ENCODE measurements at regions of chr9 and their contacts with region 1.

Region 1: DNA sequence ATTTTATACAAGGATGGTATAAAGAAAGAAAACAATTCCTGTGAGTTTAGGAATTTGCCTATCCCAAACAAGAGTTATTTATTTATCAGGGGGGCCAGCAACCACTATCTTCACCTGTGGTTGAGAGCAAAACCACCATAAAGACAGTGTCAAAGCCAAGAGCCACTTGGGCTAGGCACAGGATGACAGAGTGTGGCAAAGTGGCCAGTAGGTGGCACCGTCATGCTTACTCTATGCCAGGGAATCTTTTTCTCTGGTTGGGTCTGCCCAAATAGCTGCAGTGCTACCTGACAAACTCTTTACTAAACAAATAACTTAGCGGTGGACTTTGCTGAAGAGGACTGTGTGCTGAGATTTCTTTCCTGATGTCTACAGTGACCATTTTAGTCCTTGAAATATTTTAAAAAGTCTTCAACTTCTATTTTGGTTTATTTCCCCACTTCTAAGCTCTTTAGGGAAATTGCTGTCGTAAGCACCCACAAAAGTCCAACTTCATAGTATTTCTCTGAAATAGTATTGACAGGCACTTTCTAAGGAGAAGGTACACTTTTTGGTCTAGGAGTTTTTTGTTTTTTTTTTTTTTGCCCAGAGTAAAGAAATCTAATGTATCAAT is 285.0 kb downstream of the RFX3 start:
- DNase-seq: peak; percentile 84
- ATAC-seq: peak; percentile 93
- H3K4me3 Mint-ChIP-seq: no peak overlapping the region
- H3K27ac Mint-ChIP-seq: no peak overlapping the region
- H3K4me1 Mint-ChIP-seq: peaks cover 8% of the 10 kb centered on the region
- H3K27me3 Mint-ChIP-seq: no peaks in the 10 kb centered on the region

Region 2: DNA sequence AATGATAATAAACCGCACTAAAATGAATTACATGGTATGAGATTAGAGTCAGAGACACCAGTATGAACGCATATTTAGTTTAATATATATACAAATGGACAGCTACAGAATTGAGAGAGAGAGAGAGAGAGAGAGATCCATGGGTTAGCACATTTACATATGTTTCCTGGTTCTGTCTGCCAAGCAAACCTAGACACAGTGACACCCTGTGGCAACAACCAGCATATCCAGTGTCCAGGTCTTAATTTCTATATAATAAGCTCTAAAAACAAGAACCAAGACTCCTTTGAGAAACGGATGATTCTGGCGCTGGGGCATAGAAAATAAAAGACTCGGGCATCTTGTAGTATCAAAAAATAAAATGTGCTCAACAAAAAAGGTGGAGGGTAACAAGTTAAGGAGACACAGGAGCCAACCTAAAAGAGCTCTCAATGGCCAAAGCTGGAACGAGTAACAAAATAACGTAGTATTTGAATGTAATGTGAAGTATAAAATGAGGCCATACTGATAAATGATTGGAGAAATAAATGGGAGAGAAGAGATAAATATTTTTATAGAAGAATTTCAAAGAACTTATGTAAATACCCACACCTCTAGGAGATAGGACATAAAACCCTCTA is 200.5 kb after region 1 on chr9:
- CTCF ChIA-PET with region 1: interaction called, 75 read pairs
- POLR2A ChIA-PET with region 1: interaction called, 10 read pairs
- intact Hi-C with region 1: loop called (anchors 1 kb)
- DNase-seq: peak; percentile 66
- ATAC-seq: peak; percentile 70
- H3K4me3 Mint-ChIP-seq: no peak overlapping the region
- H3K27ac Mint-ChIP-seq: no peak overlapping the region
- H3K4me1 Mint-ChIP-seq: peaks cover 8% of the 10 kb centered on the region
- H3K27me3 Mint-ChIP-seq: no peaks in the 10 kb centered on the region

Region 3: DNA sequence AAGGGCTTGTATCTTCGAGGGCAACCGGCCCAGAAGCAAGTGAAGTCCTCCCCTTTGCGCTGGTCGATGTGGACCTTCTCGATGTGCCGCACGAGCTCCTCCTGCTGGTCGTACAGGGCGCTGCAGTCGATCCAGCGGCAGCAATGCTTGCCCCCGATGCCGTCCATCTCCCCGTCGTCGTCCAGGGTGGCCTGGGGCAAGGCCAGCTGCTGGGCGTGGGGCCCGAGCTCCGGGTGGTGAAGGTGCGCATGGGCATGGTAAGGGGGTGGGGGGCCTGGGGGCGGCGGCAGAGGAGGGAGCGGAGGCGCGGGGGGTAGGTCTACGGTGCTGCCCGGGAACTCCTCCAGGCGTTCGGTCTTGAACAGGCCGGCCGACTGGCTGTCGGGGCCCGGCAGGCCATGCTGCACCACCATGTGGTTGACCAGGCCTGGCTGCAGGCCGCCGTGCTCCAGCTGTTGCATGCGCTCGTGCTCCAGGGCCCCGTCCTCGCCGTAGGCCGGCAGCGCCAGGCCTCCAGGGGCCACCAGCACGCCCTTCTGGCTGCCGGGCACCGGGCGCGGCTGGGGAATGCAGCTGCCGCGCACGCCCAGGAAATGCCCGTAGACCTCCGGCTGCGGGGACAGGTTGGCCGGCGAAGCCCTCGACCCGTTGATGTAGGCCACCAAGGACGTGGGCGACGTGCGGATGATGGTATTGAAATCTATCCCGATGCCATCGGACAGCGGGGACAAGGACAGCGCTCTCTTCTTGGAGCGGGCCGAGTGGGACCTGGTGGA is 877.3 kb after region 1 on chr9:
- CTCF ChIA-PET with region 1: interaction called, 3 read pairs
- POLR2A ChIA-PET with region 1: no interaction called
- intact Hi-C with region 1: loop called in 1 of 2 experiments (anchors 10 kb)
- DNase-seq: peak; percentile 74
- ATAC-seq: peak; percentile 70
- H3K4me3 Mint-ChIP-seq: no peak overlapping the region
- H3K27ac Mint-ChIP-seq: no peak overlapping the region
- H3K4me1 Mint-ChIP-seq: no peaks in the 10 kb centered on the region
- H3K27me3 Mint-ChIP-seq: no peaks in the 10 kb centered on the region